ENCODE measurements at regions of chr3 and their contacts with region 1.

Region 1: GRCh38 chr3:187150599-187150998 is 11.3 kb upstream of the RPL39L start:
- DNase-seq: no peak
- ATAC-seq: peak; percentile 63
- H3K4me3 ChIP-seq: no peak overlapping the region
- H3K27ac ChIP-seq: no peak overlapping the region
- H3K4me1 ChIP-seq: no peaks in the 10 kb centered on the region
- H3K27me3 ChIP-seq: no peaks in the 10 kb centered on the region
- CTCF ChIP-seq: peak; percentile 15 to 42 (median 21); a peak in 3 of 6 replicates
- POLR2A ChIP-seq: no peak
- RAD21 ChIP-seq: peak; percentile 30; the same call in 1 of the 2 replicates

Region 2: GRCh38 chr3:186798239-186798874 is 352.2 kb before region 1 on chr3:
- CTCF ChIA-PET with region 1: no interaction called
- POLR2A ChIA-PET with region 1: no interaction called
- RAD21 ChIA-PET with region 1: no interaction called
- intact Hi-C with region 1: no loop called
- DNase-seq: no peak
- ATAC-seq: no peak
- H3K4me3 ChIP-seq: no peak overlapping the region
- H3K27ac ChIP-seq: no peak overlapping the region
- H3K4me1 ChIP-seq: no peaks in the 10 kb centered on the region
- H3K27me3 ChIP-seq: no peaks in the 10 kb centered on the region
- CTCF ChIP-seq: no peak
- POLR2A ChIP-seq: no peak
- RAD21 ChIP-seq: no peak

Region 3: DNA sequence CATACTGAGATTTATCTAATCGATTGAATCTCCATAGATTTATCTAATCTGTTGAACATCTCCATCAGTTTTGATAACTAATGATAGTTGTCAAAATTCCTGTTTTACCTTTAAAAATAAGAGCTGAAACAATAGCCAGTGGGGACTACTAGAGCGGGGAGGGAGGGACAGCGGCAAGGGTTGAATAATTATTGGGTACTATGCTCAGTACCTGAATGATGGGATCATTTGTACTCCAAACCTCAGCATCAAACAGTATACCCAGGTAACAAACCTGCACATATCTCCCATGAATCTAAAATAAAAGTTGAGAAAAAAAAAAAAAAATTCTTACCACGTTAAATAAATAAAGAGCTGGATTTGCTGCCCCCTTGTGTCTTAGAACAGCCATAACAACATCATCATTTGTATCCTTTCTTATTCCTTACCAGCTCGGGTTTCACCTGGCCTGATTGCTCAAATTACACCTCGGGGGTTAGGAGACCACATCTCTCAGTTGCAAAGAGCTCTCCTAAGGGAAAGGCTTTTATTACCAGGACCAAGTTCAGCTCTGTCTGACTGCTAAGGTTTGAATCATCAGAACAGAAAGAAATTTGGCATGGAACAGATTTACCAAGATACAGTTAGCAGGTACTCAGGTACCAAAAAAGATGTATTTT is 14.4 kb after region 1 on chr3:
- CTCF ChIA-PET with region 1: interaction called, 22 read pairs
- POLR2A ChIA-PET with region 1: no interaction called
- RAD21 ChIA-PET with region 1: no interaction called
- intact Hi-C with region 1: no loop called
- DNase-seq: peak; percentile 45
- ATAC-seq: peak; percentile 90
- H3K4me3 ChIP-seq: no peak overlapping the region
- H3K27ac ChIP-seq: no peak overlapping the region
- H3K4me1 ChIP-seq: peaks cover 0 to 2% of the 10 kb centered on the region in 2 experiments; a peak in 1 of 4 replicates
- H3K27me3 ChIP-seq: no peaks in the 10 kb centered on the region
- CTCF ChIP-seq: peak; percentile 49 to 86 (median 67)
- POLR2A ChIP-seq: no peak
- RAD21 ChIP-seq: peak; percentile 78

Measured in HCT116 (cell line).